ENCODE measurements at regions of chr7 and their contacts with region 1.

Region 1: GRCh38 chr7:89308535-89308934 is 513.0 kb upstream of the TEX47 start:
- DNase-seq: no peak
- ATAC-seq: no peak

Region 2: DNA sequence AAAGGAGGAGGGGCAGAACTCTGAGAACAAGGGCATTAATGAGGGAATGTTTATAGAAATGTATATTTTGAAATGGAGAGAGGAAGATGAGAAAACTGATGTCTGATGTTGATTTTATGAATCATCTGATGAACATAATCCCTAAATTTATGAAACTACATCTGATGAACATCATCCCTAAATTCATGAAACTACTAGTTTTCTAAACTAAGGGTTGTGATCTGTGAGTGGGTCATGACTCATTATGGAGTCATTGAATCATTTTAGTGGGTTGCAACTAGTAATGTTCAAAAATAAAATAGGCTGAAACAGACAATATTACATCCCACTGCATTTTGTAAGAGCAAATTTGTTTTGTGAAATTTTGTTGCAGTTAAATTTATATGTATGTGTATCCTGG is 70.4 kb before region 1 on chr7:
- intact Hi-C with region 1: loop called (anchors 2 kb)
- DNase-seq: no peak
- ATAC-seq: no peak